ENCODE measurements at regions of chr5 and their contacts with region 1.

Region 1: DNA sequence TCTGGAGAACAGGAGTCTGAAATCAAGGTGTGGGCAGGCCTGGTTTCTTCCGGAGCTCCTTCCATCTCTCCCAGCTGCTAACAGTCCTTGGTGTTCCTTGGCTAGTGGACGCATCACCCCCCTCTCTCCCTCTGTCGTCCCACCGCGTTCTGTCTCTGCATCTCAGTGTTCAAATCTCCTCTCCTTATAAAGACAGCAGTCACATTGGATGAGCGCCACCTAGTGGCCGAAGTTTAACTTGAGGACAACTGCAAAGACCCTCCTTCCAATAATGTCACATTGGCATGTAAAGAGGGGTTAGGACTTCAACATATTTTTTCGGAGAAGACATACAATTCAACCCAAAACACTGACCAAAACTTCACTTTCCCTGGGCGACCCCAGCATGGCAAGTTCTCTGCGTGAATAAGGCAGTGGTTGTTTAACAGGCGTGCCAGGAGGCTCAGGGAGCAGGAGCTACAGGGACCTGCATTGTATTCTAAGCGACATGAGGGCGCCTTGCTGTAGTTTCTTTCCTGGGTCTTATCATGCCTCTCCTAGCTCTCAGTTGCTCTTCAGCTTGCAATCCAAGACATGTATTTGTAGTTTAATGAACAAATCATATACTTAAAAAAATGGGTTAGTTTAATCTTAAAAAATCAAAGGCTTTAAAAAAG is 27.9 kb upstream of the BASP1 start:
- DNase-seq: peak; percentile 88
- ATAC-seq: peak; percentile 75
- H3K4me3 Mint-ChIP-seq: no peak overlapping the region
- H3K27ac Mint-ChIP-seq: no peak overlapping the region
- H3K4me1 Mint-ChIP-seq: peaks cover 14% of the 10 kb centered on the region
- H3K27me3 Mint-ChIP-seq: no peaks in the 10 kb centered on the region
- CTCF ChIP-seq: peak; percentile 88

Region 2: DNA sequence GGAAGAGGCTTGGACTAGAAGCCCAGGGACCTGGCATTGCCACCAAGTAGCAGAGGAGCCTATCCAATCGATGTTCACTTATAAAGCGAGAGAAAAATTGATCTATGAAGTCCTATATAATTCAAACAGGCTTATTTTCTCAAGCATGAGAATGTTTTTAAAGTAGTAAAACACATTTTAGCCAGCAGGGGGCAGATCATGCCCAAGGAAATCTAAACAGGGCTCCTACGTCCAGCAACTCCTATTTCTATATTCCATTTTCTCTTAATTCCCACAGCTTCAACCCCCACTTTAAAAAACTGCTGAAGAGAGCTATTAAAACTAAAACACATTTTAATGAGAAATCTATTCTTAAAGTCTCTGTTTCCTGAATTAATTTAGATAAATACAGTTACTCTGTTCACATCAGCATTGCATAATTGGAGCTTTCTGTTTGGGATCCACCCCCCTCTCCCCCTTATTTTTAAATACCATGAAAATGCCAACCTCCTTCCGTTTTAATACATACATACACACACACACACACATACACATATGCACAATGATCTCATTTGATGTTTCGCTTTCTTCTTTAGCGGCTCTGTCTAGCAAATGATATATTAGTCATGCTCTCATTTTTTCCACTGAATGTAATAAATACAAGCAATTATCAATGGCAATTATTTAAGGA is 398.3 kb before region 1 on chr5:
- CTCF ChIA-PET with region 1: interaction called, 26 read pairs
- POLR2A ChIA-PET with region 1: no interaction called
- DNase-seq: no peak
- ATAC-seq: no peak
- H3K4me3 Mint-ChIP-seq: no peak overlapping the region
- H3K27ac Mint-ChIP-seq: no peak overlapping the region
- H3K4me1 Mint-ChIP-seq: peaks cover 6% of the 10 kb centered on the region
- H3K27me3 Mint-ChIP-seq: no peaks in the 10 kb centered on the region; the same call in 1 of the 2 replicates
- CTCF ChIP-seq: peak; percentile 72

Region 3: GRCh38 chr5:16918156-16918555 is 271.4 kb before region 1 on chr5:
- CTCF ChIA-PET with region 1: interaction called, 11 read pairs
- POLR2A ChIA-PET with region 1: no interaction called
- DNase-seq: no peak
- ATAC-seq: no peak
- H3K4me3 Mint-ChIP-seq: no peak overlapping the region
- H3K27ac Mint-ChIP-seq: peak overlapping the region; percentile 29
- H3K4me1 Mint-ChIP-seq: peaks cover 28% of the 10 kb centered on the region
- H3K27me3 Mint-ChIP-seq: no peaks in the 10 kb centered on the region
- CTCF ChIP-seq: no peak

Region 4: GRCh38 chr5:16980992-16981391 is 208.5 kb before region 1 on chr5:
- CTCF ChIA-PET with region 1: interaction called, 11 read pairs
- POLR2A ChIA-PET with region 1: no interaction called
- DNase-seq: no peak
- ATAC-seq: no peak
- H3K4me3 Mint-ChIP-seq: no peak overlapping the region
- H3K27ac Mint-ChIP-seq: no peak overlapping the region
- H3K4me1 Mint-ChIP-seq: no peaks in the 10 kb centered on the region
- H3K27me3 Mint-ChIP-seq: no peaks in the 10 kb centered on the region
- CTCF ChIP-seq: no peak

Region 5: GRCh38 chr5:17132444-17133083 is 56.9 kb before region 1 on chr5:
- CTCF ChIA-PET with region 1: interaction called, 44 read pairs
- POLR2A ChIA-PET with region 1: no interaction called
- DNase-seq: no peak
- ATAC-seq: peak; percentile 65
- H3K4me3 Mint-ChIP-seq: no peak overlapping the region
- H3K27ac Mint-ChIP-seq: no peak overlapping the region
- H3K4me1 Mint-ChIP-seq: peaks cover 9% of the 10 kb centered on the region
- H3K27me3 Mint-ChIP-seq: peaks cover under 1% of the 10 kb centered on the region
- CTCF ChIP-seq: peak; percentile 65

Region 6: DNA sequence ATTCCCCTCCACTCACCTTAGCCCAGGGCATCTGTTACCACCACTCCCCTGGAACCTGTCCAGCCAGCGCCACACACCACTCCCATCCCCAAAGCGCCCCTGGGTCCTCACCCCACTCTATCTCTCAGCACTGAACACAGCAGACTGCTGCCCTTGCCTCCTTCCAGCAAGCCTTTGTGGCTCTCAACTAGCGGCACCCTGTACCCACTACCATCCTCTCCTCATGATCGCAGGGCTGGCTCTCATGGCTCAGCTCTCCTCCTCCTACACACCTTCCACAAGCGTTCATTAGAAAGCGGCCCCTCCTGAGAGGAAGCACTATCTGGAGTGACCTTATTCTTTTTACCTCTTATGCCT is 14.6 kb after region 1 on chr5:
- CTCF ChIA-PET with region 1: interaction called, 15 read pairs
- POLR2A ChIA-PET with region 1: no interaction called
- DNase-seq: no peak
- ATAC-seq: peak; percentile 34
- H3K4me3 Mint-ChIP-seq: no peak overlapping the region
- H3K27ac Mint-ChIP-seq: peak overlapping the region; percentile 42; the same call in 1 of the 2 replicates
- H3K4me1 Mint-ChIP-seq: peaks cover 16% of the 10 kb centered on the region
- H3K27me3 Mint-ChIP-seq: no peaks in the 10 kb centered on the region
- CTCF ChIP-seq: no peak